Head of caudate nucleus (tissue), 42 donors: ENCODE measurements at regions of chr3 and their contacts with region 1.

Region 1: DNA sequence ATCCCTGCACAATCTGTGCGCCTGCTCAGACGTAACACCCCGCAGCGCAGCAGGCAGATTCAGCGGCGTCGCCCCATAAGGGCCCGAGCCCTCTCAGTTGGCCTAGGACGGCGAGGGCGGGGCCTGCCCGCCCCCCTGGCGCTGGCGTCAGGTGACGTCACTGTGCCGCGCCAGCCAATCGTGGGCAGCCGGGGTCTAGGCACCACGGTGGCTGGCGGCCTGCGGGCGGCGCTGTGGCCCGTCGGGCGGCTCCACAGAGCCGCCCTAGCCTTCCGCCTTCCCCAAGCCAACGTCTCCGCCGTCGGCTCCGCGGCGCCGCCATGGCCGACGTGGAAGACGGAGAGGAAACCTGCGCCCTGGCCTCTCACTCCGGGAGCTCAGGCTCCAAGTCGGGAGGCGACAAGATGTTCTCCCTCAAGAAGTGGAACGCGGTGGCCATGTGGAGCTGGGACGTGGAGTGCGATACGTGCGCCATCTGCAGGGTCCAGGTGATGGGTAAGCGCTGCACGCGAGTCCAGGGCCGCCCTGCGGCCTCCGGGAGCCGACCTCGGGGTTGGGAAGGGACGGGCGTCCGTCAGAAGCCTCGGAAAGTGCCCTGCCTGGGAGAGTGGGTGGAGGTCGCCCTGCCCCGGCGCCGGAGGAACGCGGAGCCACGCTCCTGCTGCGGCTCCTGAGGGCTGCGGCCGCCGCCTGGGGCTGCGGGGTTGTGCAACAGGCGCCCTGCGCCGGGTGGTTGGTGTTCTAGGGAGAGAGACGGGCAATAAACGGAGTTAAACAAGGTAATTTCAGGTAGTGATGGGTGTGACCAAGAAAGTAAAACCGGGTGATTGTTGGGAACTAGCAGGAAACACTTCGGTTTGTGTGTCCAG is at the start of gene RNF7:
- DNase-seq: peak; percentile 86 to 98 (median 96)

Region 2: DNA sequence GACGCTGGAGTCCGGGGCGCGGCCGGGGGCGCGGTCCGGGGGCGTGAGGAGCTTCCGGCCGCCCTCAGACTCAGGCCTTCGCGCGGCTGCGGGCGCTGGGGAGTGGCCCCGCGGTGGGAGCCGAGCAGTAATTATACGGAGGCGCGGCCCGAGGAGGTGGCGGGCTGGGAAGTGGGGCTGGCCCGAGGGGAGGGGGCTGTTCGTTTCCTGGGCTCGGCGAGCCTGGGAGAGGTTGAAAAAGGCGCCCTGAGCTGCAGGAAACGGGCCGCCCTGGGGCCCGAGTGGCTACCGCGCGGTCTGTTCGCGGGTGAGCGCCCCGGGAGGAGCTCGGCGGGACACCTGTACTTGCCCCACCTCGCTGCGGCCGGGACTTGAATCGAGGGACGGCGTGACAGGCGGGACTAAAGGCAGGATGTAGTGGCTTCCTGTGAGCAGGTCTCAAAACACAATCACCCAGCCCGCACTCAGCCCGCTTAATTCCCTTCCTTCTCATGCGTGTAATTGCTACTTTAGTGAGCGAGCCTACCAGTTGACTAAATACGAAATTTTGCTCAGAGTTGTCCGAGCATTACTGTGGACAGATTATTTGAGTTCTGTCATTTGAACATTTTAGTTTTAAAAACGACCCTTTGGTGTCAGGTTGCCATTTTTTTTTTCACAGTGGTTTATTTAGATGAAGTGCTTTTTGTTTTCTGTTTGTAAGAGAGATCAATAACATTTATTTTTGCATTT is 250.6 kb before region 1 on chr3:
- intact Hi-C with region 1: loop called (anchors 10 kb)
- DNase-seq: peak; percentile 23 to 70 (median 50)

Region 3: DNA sequence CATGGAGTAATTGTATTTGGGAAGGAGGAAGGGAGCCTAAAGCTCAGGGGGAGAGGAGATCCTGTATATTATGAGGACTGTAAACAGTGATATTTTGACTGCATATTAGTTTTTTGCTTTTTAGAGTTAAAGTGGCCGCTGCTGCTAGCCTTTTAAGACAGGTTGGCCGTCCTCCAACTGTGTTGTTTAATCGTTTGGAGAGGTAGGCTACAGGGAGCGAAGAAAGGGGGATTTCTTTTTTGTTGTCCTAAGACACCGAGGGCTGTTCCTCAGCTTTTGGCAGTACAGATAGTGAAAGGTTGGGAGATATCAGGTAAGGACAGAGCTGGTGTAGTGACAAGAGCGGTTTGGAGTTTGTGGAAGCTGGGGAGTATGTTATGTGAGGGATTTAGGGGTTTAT is 38.4 kb before region 1 on chr3:
- intact Hi-C with region 1: no loop called
- DNase-seq: no peak

Region 4: GRCh38 chr3:141876381-141876890 is 138.2 kb after region 1 on chr3 and contains the start of gene ATP1B3:
- intact Hi-C with region 1: loop called (anchors 2 kb)
- DNase-seq: peak; percentile 60 to 92 (median 86)